Activated B cell treated with CpG ODN at 0.5 μM for 24 hours (primary cell): ENCODE measurements at regions of chr2 and their contacts with region 1.

Region 1: DNA sequence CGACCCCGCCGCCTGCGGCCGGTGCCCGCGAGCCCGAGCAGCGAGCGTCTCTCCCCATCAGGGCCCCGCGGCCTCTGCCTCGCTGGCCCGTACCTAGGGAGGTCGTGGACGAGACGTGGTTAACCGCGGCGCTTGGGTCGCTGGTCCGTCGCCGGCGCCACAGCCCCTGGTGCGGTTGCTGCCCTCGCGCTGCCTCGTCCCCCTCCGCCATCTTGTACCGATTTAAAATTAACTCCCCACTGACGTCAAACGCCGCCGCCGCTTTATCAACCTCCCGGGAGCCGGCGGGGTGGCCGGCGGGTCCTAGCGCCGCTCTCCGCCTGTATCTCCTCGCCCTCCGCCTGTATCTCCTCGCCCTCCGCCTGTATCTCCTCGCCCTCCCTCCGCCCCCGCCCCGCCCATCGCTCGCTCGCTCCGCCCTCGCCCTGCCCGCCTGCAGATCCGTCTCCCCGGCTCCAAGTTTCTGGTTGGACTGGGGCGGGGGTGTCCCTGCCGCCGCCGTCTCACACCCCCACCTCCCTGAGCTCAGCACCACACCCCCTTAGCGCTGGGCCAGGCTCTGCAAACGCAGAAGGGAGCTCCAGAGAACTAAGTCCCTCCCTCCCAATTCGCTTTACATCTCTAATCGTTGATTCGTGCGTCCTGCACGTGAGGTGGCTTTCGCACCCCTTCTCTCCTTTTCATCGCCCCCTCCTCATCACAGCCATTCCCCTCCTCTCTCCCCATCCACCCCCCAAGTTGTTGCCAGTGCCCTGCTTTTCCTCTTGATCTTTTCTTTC is at the start of gene ATL2:
- DNase-seq: peak; percentile 87
- ATAC-seq: peak; percentile 87
- H3K4me3 Mint-ChIP-seq: peak within 1 kb of the TSS; percentile 91
- H3K27ac Mint-ChIP-seq: peak within 1 kb of the TSS; percentile 86
- H3K4me1 Mint-ChIP-seq: peaks cover 43% of the 10 kb centered on the region
- H3K27me3 Mint-ChIP-seq: peaks cover 4% of the 10 kb centered on the region
- CTCF ChIP-seq: no peak
- total RNA-seq, gene ATL2: 40.0 and 43.2 TPM in 2 replicates

Region 2: DNA sequence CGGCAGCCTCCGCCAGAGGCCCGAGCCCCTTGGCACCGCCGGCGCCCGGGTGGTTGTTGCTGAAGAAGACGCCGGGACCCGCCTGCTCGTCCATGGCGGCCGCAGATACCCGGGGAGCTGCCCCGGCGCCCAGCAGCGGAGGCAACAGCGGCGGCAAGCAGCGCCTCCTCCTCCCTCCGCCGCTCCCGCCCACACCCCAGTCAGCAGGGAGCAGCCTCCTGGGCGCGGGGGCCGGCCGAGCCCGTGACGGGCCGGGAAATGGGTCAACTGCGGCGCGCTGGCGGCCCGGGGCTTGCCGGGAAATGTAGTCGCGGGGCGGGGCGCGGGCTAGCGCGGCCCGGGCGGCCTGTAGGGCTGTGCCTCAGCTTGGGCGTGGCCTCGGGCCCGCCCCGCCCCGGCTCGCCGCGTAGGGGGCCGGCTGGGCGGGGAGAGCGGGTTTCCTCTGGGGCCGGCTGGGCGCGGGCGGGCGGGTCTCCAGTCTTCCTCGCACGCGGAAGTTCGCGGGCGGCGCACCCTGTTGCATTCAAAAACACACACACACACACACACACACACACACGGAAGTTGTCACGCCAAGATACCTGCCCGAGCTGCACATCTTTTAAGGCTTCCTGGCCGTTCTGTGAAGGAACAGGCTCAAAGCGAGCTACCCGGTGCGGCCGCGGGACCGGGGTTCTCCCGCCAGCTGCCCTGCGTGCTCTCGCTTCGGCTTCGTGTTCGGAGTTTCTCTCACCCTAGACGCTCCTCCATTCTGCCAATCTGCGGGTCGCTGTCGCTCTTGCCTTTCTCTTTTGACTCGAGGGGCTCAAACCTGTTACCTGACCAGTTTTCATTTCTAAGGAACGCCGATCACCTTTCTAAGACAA is 1410.6 kb before region 1 on chr2 and contains the start of gene STRN:
- CTCF ChIA-PET with region 1: no interaction called
- POLR2A ChIA-PET with region 1: no interaction called
- intact Hi-C with region 1: loop called (anchors 1 kb)
- DNase-seq: peak; percentile 100
- ATAC-seq: peak; percentile 91
- H3K4me3 Mint-ChIP-seq: peak within 1 kb of the TSS; percentile 97
- H3K27ac Mint-ChIP-seq: peak within 1 kb of the TSS; percentile 99
- H3K4me1 Mint-ChIP-seq: peaks cover 45% of the 10 kb centered on the region
- H3K27me3 Mint-ChIP-seq: no peaks in the 10 kb centered on the region
- CTCF ChIP-seq: no peak
- total RNA-seq, gene STRN: 24.7 and 24.9 TPM in 2 replicates

Region 3: DNA sequence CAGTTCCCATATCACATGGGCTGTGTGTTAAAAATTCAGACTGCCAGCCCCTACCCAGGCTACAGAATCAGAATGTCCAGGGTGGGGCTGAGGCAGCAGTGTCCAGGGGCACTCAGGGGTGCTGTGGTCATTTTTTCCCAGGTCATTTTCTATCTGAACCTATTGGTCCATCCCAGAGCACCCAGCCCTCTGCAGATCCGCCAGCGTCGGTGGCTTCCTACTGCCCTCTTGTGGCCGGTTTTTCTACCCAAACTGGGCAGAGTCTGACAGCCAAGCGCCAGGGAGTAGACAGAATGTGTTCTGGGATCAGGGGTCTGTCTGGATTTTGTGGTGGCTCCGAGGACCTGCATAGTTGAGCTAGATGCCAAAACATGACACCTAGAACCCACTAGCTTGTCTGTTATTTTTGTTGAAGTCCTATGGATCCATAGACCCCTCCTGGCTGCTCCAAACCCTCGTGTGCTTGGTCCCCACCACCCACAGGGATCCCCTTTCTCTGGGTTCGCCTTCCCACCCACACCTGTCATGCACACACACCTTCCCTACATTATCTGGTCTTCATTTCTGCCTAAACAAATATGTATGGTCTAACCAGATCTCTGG is 486.2 kb before region 1 on chr2:
- CTCF ChIA-PET with region 1: no interaction called
- POLR2A ChIA-PET with region 1: no interaction called
- intact Hi-C with region 1: loop called (anchors 2 kb)
- DNase-seq: peak; percentile 46
- ATAC-seq: peak; percentile 59
- H3K4me3 Mint-ChIP-seq: no peak overlapping the region
- H3K27ac Mint-ChIP-seq: no peak overlapping the region
- H3K4me1 Mint-ChIP-seq: peaks cover 39% of the 10 kb centered on the region
- H3K27me3 Mint-ChIP-seq: no peaks in the 10 kb centered on the region
- CTCF ChIP-seq: no peak

Region 4: DNA sequence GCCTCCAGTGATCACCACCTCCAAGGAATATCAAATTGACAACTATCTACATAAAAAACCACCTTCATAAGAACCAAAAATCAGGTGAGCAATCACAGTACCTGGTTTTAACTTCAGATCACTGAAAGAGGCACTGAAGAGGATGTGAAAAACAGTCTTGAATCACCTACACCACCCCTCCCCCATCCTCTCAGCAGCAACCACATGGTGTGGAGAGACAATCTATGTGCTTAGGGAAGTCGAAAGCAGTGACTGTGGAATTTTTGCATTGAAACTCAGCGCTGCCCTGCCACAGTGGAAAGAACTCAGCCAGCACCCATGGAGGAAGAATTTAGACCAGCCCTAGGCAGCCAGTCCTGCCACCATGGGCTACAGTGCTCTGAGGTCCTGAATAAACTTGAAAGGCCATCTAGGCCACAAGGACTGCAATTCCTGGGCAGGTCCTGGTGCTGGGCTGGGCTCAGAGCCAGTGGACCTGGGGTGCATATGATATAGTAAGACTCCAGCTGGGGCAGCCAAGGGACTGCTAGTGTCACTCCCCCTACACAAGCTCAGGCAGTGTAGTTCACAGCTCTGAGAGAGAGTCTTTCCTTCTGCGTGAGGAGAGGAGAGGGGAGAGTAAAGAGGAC is 75.8 kb before region 1 on chr2:
- CTCF ChIA-PET with region 1: no interaction called
- POLR2A ChIA-PET with region 1: no interaction called
- intact Hi-C with region 1: no loop called
- DNase-seq: no peak
- ATAC-seq: peak; percentile 47
- H3K4me3 Mint-ChIP-seq: no peak overlapping the region
- H3K27ac Mint-ChIP-seq: peak overlapping the region; percentile 8
- H3K4me1 Mint-ChIP-seq: peaks cover 30% of the 10 kb centered on the region
- H3K27me3 Mint-ChIP-seq: no peaks in the 10 kb centered on the region
- CTCF ChIP-seq: no peak

Region 5: DNA sequence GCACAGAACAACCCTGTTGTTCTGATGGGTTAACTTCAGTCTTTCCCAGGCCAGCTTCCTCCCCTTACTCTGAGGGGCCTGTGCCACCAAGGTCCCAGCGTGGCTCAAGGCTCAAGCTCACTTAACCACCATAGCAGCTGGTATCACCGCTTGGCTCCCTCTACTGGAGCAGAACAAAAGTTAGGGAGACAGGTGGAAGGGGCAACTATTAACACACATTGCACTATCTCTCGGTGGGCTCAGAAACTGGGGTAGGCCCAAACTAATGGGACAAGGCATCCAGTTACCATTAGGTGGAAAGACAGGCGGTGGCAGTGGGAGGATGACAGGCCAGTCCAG is 88.5 kb after region 1 on chr2:
- CTCF ChIA-PET with region 1: interaction called, 6 read pairs
- POLR2A ChIA-PET with region 1: no interaction called
- intact Hi-C with region 1: loop called (anchors 1 kb)
- DNase-seq: no peak
- ATAC-seq: no peak
- H3K4me3 Mint-ChIP-seq: no peak overlapping the region
- H3K27ac Mint-ChIP-seq: no peak overlapping the region
- H3K4me1 Mint-ChIP-seq: no peaks in the 10 kb centered on the region
- H3K27me3 Mint-ChIP-seq: peaks cover 5% of the 10 kb centered on the region
- CTCF ChIP-seq: no peak

Region 6: GRCh38 chr2:38602732-38603401 is 225.6 kb after region 1 on chr2 and contains the start of gene HNRNPLL:
- CTCF ChIA-PET with region 1: no interaction called
- POLR2A ChIA-PET with region 1: no interaction called
- intact Hi-C with region 1: loop called (anchors 1 kb)
- DNase-seq: peak; percentile 84
- ATAC-seq: peak; percentile 87
- H3K4me3 Mint-ChIP-seq: peak within 1 kb of the TSS; percentile 89
- H3K27ac Mint-ChIP-seq: peak within 1 kb of the TSS; percentile 65
- H3K4me1 Mint-ChIP-seq: peaks cover 20% of the 10 kb centered on the region
- H3K27me3 Mint-ChIP-seq: peaks cover 38% of the 10 kb centered on the region
- CTCF ChIP-seq: no peak
- total RNA-seq, gene HNRNPLL: 8.6 and 8.8 TPM in 2 replicates

Region 7: GRCh38 chr2:38875576-38876367 is 498.5 kb after region 1 on chr2 and contains the starts of genes DHX57 and MORN2:
- CTCF ChIA-PET with region 1: no interaction called
- POLR2A ChIA-PET with region 1: no interaction called
- intact Hi-C with region 1: loop called (anchors 1 kb)
- DNase-seq: peak; percentile 69
- ATAC-seq: peak; percentile 98
- H3K4me3 Mint-ChIP-seq: peak within 1 kb of the TSS; percentile 93
- H3K27ac Mint-ChIP-seq: peak within 1 kb of the TSS; percentile 79
- H3K4me1 Mint-ChIP-seq: peaks cover 22% of the 10 kb centered on the region
- H3K27me3 Mint-ChIP-seq: no peaks in the 10 kb centered on the region
- CTCF ChIP-seq: no peak
- total RNA-seq, gene DHX57: 20.4 and 21.5 TPM in 2 replicates
- total RNA-seq, gene MORN2: 4.1 and 4.8 TPM in 2 replicates

Region 8: GRCh38 chr2:38978296-38978903 is 601.2 kb after region 1 on chr2:
- CTCF ChIA-PET with region 1: no interaction called
- POLR2A ChIA-PET with region 1: no interaction called
- intact Hi-C with region 1: no loop called
- DNase-seq: no peak
- ATAC-seq: no peak
- H3K4me3 Mint-ChIP-seq: no peak overlapping the region
- H3K27ac Mint-ChIP-seq: no peak overlapping the region
- H3K4me1 Mint-ChIP-seq: no peaks in the 10 kb centered on the region
- H3K27me3 Mint-ChIP-seq: no peaks in the 10 kb centered on the region
- CTCF ChIP-seq: no peak